ENCODE measurements at regions of chr21 and their contacts with region 1.

Region 1: GRCh38 chr21:33199516-33200217 is 30.1 kb upstream of the IFNAR2 start:
- DNase-seq: peak; percentile 43 to 61
- ATAC-seq: peak; percentile 85 to 92 (median 86)
- H3K4me3 ChIP-seq: no peak overlapping the region
- H3K27ac ChIP-seq: peak overlapping the region; percentile 69
- H3K4me1 ChIP-seq: peaks cover 21% of the 10 kb centered on the region
- H3K27me3 ChIP-seq: no peaks in the 10 kb centered on the region
- CTCF ChIP-seq: peak; percentile 81

Region 2: GRCh38 chr21:32834916-32835235 is 364.8 kb before region 1 on chr21:
- intact Hi-C with region 1: loop called (anchors 5 to 10 kb)
- DNase-seq: no peak
- ATAC-seq: no peak
- H3K4me3 ChIP-seq: no peak overlapping the region
- H3K27ac ChIP-seq: no peak overlapping the region
- H3K4me1 ChIP-seq: no peaks in the 10 kb centered on the region
- H3K27me3 ChIP-seq: peaks cover 0 to 2% (median 0%) of the 10 kb centered on the region in 3 donors
- CTCF ChIP-seq: no peak

Region 3: GRCh38 chr21:33127154-33127893 is 72.3 kb before region 1 on chr21:
- intact Hi-C with region 1: loop called in 1 of 2 experiments (anchors 5 kb)
- DNase-seq: peak; percentile 56 to 80
- ATAC-seq: peak; percentile 76 to 92 (median 90)
- H3K4me3 ChIP-seq: peak overlapping the region; percentile 39
- H3K27ac ChIP-seq: no peak overlapping the region
- H3K4me1 ChIP-seq: no peaks in the 10 kb centered on the region
- H3K27me3 ChIP-seq: peaks cover 0 to 21% (median 8%) of the 10 kb centered on the region in 3 donors
- CTCF ChIP-seq: peak; percentile 75

Region 4: GRCh38 chr21:33324291-33325221 is 124.9 kb after region 1 on chr21 and contains the start of gene IFNAR1:
- intact Hi-C with region 1: loop called in 1 of 2 experiments (anchors 5 kb)
- DNase-seq: peak; percentile 99 to 100
- ATAC-seq: peak; percentile 99 to 100 (median 99)
- H3K4me3 ChIP-seq: peak within 1 kb of the TSS; percentile 86
- H3K27ac ChIP-seq: peak within 1 kb of the TSS; percentile 95
- H3K4me1 ChIP-seq: peaks cover 26% of the 10 kb centered on the region
- H3K27me3 ChIP-seq: no peaks in the 10 kb centered on the region
- CTCF ChIP-seq: no peak
- total RNA-seq, gene IFNAR1: 16.1 to 20.8 (median 18.2) TPM

Region 5: GRCh38 chr21:33374450-33375096 is 174.9 kb after region 1 on chr21:
- intact Hi-C with region 1: loop called in 1 of 2 experiments (anchors 5 kb)
- DNase-seq: no peak
- ATAC-seq: peak; percentile 37 to 66 (median 48)
- H3K4me3 ChIP-seq: no peak overlapping the region
- H3K27ac ChIP-seq: no peak overlapping the region
- H3K4me1 ChIP-seq: peaks cover 6% of the 10 kb centered on the region
- H3K27me3 ChIP-seq: peaks cover 0 to 3% (median 0%) of the 10 kb centered on the region in 3 donors
- CTCF ChIP-seq: peak; percentile 52

Region 6: DNA sequence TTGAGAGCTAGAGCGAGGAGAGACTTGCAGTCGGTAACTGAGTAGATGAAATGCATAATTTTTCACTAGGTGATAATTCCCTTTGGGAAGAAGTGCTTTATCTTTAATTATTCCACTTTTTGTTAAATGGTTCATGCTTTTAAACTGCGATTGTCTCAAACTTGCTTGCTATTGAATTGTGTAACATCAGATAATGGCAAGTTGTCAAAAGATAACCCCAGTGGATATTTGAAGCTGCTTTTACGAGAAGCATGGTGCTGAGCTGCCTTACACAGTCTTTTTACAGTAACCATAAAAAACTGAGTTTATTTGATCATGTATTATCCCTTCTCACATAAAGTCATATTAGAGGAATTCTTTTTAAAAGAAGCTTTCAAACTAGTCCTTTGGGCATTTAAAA is 249.9 kb after region 1 on chr21:
- intact Hi-C with region 1: loop called (anchors 2 to 5 kb)
- DNase-seq: no peak
- ATAC-seq: no peak
- H3K4me3 ChIP-seq: no peak overlapping the region
- H3K27ac ChIP-seq: no peak overlapping the region
- H3K4me1 ChIP-seq: no peaks in the 10 kb centered on the region
- H3K27me3 ChIP-seq: no peaks in the 10 kb centered on the region
- CTCF ChIP-seq: no peak